KBM-7 (cell line): ENCODE measurements at regions of chr1 and their contacts with region 1.

Region 1: GRCh38 chr1:162854245-162854882 is 6.6 kb downstream of the CCDC190 start:
- DNase-seq: peak; percentile 63

Region 2: DNA sequence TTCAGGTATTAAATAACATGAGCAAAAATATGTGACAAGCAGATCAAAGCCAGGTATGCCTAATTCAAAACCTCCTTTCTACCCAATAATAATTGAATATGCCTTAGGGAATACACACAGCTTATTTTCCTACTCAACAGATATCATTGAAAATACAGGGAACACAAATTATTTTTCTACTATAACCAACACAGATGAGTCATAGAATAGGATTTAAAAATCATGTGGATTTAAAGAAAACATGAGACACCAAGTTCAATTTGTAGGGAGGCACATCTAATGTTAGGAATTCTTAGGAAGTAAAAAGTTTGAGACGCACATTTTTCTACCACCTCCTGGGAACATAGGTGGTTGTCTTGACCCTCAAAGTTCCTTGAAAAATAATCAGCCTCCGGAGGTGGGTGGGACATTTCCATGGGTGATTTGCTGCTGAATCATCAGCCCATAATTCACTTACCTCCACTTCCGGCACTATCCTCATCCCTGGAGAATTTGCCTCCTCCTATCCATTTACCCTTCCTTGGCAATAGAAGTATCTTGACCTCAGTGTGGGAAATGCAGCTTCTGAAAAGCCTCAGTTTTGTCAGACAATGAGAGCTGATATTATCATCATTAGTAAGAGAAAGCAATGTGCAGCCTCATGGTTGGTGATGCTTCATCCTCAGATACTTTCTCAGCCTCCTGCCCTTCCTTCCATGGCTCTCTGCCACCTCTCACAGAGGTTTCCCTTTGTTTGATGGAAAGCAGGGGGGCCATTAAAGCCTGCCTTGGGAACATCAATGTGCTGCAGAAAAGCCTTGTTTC is 181.3 kb after region 1 on chr1:
- in situ Hi-C with region 1: no loop called
- DNase-seq: no peak

Region 3: DNA sequence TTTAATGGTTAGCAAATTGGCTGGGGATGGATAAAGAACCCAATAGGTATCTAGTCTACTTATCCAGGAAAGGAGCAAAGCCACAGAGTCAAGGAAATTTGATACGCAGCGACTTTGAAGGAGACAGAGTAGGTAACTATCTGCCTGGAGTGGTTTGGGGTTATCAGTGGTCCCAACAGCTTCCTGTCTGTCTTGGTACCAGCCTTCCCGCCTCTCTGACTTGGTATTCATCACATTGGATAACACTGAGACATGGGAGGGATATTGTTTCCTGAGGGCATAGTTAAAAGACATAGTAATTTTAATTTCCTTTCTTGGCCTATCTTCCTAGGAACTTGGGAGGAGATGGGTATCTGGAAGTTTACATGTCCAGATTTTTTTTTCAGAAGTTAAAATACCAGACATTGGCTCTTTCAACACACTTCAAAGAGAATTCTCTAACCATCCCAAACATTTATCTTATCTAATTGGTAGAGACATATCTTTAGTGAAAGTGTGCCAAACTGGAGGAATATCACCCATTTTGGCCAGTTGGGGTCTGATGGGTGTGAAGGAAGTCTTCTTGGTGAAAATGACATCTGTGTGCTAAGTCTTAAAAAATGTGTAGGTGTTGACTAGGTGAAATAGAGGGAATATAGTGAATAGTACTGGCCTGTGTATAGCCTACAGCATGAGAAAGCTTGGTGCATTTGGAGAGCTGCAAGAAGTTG is 283.3 kb after region 1 on chr1:
- in situ Hi-C with region 1: no loop called
- DNase-seq: no peak

Region 4: GRCh38 chr1:163174524-163175437 is 320.4 kb after region 1 on chr1:
- in situ Hi-C with region 1: loop called (anchors 25 kb)
- DNase-seq: peak; percentile 42

Region 5: GRCh38 chr1:163321311-163322305 is 467.2 kb after region 1 on chr1 and contains the start of gene NUF2:
- in situ Hi-C with region 1: loop called (anchors 25 kb)
- DNase-seq: peak; percentile 99